Head of caudate nucleus (tissue), 42 donors: ENCODE measurements at regions of chr3 and their contacts with region 1.

Region 1: DNA sequence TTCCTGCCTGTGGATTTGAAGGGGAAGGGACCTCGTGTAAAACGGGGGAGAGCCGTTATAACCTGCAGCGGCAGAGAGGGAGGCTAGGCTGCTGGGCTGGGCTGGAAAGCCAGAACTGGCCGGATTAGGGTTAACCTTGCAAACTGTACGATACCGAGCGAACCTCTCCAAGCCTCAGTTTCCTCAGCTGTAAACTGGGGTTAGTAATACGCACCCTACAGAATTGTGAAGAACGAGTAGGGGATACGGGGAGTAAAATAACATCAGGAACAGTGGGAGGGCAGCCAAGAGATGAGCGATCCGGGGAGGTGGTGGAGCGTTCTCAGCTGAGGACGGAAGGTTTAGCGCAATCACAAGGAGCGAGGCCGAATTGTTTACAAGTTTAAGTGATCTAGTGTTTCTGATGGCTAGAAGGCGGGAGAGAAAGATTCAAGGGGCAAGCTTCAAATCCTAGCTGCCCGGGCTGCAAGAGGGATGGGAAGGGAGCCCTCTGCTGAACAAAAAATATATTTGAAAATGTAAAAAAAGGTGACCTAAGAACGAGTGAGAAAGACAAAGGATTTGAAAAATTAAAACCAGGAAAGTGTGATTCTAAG is 768 bp upstream of the SEMA5B start:
- DNase-seq: peak in 38 of 42 donors; percentile 12 to 80 (median 44)

Region 2: GRCh38 chr3:122942937-122943827 is 85.1 kb before region 1 on chr3:
- intact Hi-C with region 1: loop called (anchors 2 kb)
- DNase-seq: peak; percentile 36 to 86 (median 73)

Region 3: GRCh38 chr3:123066896-123067688 is 38.8 kb after region 1 on chr3 and contains the start of gene PDIA5:
- intact Hi-C with region 1: no loop called
- DNase-seq: peak; percentile 80 to 97 (median 93)